SK-N-SH (cell line): ENCODE measurements at regions of chr11 and their contacts with region 1.

Region 1: DNA sequence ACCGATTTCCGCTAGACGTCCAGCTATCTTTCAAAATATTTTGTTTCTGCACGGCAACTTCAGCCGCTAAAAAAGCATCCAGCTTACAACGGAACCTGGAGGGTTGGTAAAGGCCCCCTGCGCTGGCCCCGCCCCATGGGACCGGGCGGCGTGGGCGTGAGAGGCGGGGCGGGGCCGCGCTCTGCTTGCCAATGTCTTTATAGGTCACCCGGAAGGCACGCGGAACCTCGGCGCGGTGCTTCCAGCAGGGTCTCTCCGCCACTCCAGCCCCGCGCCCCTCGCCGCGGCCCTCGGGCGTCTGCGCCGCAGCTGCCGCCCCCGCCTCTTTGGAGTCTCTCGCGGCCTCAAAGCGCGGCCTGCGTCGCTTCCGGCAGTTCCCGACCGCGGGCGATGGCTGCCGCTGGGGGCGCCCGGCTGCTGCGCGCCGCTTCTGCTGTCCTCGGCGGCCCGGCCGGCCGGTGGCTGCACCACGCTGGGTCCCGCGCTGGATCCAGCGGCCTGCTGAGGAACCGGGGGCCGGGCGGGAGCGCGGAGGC is at the start of gene FDX1:
- DNase-seq: peak; percentile 88
- H3K4me3 ChIP-seq: peak within 1 kb of the TSS; percentile 86 to 91
- H3K27ac ChIP-seq: peak within 1 kb of the TSS; percentile 54 to 81
- H3K4me1 ChIP-seq: peaks cover 13 to 23% of the 10 kb centered on the region in 2 experiments; a peak in 3 of 4 replicates
- H3K27me3 ChIP-seq: no peaks in the 10 kb centered on the region
- CTCF ChIP-seq: peak; percentile 51; the same call in 1 of the 2 replicates
- EP300 ChIP-seq: no peak
- RAD21 ChIP-seq: no peak
- polyA plus RNA-seq, gene FDX1: 3.7 and 4.0 TPM in 2 replicates

Region 2: DNA sequence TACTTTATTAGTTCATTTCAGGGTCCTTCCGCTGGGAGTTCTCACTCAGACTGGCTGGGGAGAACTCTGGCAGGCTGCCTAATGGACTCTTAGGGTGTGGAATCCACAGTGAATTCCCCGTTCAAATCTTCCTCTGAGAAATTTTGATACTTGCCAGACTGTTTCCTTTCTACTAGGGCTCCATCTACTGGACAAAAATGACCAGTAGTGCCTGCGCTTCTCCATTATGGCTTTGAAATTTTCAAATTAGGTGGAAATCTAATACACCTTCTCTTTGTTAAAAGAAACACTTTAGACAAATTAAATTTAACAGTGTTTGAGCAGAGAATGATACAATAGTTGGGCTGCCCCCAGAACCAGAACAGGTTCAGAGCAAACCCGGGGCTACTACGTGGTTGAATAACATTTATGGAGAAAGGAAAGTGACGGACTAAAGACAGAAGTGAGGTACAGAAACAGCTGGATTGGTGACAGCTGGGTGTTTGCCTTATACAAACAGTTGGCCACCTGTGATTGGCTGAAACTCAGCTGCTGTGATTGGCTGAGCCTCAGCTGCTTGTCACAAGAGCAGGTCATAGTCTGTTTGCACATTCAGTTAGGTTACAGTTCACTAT is 53.0 kb before region 1 on chr11:
- CTCF ChIA-PET with region 1: interaction called, 13 read pairs
- POLR2A ChIA-PET with region 1: no interaction called
- DNase-seq: peak; percentile 67
- H3K4me3 ChIP-seq: peak overlapping the region; percentile 10 to 24; a peak in 2 of 4 replicates
- H3K27ac ChIP-seq: no peak overlapping the region
- H3K4me1 ChIP-seq: peaks cover 6 to 18% of the 10 kb centered on the region in 2 experiments; a peak in 3 of 4 replicates
- H3K27me3 ChIP-seq: no peaks in the 10 kb centered on the region
- CTCF ChIP-seq: peak; percentile 92
- EP300 ChIP-seq: no peak
- RAD21 ChIP-seq: peak; percentile 83

Region 3: GRCh38 chr11:110415081-110415480 is 14.7 kb before region 1 on chr11:
- CTCF ChIA-PET with region 1: interaction called, 17 read pairs
- POLR2A ChIA-PET with region 1: no interaction called
- DNase-seq: no peak
- H3K4me3 ChIP-seq: no peak overlapping the region
- H3K27ac ChIP-seq: no peak overlapping the region
- H3K4me1 ChIP-seq: no peaks in the 10 kb centered on the region
- H3K27me3 ChIP-seq: no peaks in the 10 kb centered on the region
- CTCF ChIP-seq: no peak
- EP300 ChIP-seq: no peak
- RAD21 ChIP-seq: no peak

Region 4: GRCh38 chr11:110447897-110448745 is 18.3 kb after region 1 on chr11:
- CTCF ChIA-PET with region 1: interaction called, 26 read pairs
- POLR2A ChIA-PET with region 1: interaction called, 3 read pairs
- DNase-seq: no peak
- H3K4me3 ChIP-seq: no peak overlapping the region
- H3K27ac ChIP-seq: no peak overlapping the region
- H3K4me1 ChIP-seq: no peaks in the 10 kb centered on the region
- H3K27me3 ChIP-seq: no peaks in the 10 kb centered on the region
- CTCF ChIP-seq: peak; percentile 65
- EP300 ChIP-seq: no peak
- RAD21 ChIP-seq: peak; percentile 63